Dendritic cell treated with granulocyte-macrophage colony-stimulating factor and Interleukin-4, amounts not matched to agents 40 ng/mL and 50 ng/mL, for 4 days (primary cell): ENCODE measurements at regions of chr2 and their contacts with region 1.

Region 1: DNA sequence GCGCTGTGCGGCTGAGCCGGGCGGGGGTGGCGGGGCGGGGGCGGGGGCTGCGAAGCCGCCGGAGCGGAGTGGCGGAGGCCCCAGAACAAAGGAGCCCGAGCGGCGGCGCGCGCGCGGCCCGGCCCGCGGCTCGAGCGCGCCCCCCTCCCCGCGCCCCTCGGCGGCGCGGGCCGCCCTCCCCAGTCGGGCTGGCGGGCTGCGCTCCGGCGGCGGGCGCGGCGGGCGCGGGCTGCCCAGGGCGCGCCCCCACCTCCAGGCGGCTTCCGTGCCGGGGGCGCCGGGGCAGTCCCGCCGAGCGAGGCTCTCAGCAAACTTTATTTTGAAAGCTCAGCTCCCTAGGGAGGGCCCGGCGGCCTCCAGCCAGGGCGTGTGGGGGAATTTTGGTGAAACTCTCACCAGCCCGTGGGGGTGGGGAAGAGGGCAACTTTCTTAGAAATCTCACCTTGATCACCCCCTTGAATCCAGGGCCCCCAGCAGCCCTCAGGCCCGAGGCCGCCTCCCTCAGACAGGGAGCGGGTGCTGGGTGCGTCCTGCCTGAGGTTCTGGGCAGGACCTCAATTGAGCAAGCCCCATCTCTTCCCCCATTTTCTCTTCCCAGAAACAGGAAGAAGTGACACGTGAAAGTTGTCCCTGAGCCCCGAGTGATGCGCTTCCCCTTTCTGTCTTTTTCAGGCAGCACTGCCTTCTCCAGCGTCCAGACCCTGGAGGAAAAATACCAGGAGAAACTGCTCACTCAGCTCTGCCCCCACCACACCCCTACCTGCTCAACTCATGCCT is 786 bp downstream of the TET3 start:
- H3K4me3 Mint-ChIP-seq: peak overlapping the region; percentile 97
- H3K27ac Mint-ChIP-seq: peak overlapping the region; percentile 94
- H3K4me1 Mint-ChIP-seq: peaks cover 85% of the 10 kb centered on the region
- H3K27me3 Mint-ChIP-seq: no peaks in the 10 kb centered on the region

Region 2: DNA sequence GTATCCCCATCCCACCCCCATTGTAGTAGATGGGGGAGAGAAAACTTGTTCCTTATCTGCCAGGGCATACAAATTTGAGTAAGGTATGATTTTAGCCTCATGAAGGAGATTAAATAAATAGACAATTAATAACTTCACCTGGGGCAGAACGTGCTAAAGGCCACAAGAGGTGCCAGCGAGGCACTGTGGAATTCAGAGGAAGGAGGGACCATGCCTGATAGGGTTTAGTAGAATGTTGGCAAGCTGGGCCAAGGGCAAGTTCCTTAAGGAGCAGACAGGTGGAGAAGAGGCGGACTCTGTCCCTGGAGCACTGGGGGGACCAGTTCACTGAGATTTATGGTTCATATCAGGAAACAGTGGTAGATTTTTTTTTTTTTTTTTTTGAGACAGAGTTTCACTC is 134.2 kb before region 1 on chr2:
- intact Hi-C with region 1: loop called (anchors 10 kb)
- H3K4me3 Mint-ChIP-seq: no peak overlapping the region
- H3K27ac Mint-ChIP-seq: no peak overlapping the region
- H3K4me1 Mint-ChIP-seq: no peaks in the 10 kb centered on the region
- H3K27me3 Mint-ChIP-seq: no peaks in the 10 kb centered on the region

Region 3: GRCh38 chr2:73896362-73897239 is 88.9 kb before region 1 on chr2:
- intact Hi-C with region 1: no loop called
- H3K4me3 Mint-ChIP-seq: no peak overlapping the region
- H3K27ac Mint-ChIP-seq: no peak overlapping the region
- H3K4me1 Mint-ChIP-seq: peaks cover 27% of the 10 kb centered on the region
- H3K27me3 Mint-ChIP-seq: peaks cover 11% of the 10 kb centered on the region

Region 4: DNA sequence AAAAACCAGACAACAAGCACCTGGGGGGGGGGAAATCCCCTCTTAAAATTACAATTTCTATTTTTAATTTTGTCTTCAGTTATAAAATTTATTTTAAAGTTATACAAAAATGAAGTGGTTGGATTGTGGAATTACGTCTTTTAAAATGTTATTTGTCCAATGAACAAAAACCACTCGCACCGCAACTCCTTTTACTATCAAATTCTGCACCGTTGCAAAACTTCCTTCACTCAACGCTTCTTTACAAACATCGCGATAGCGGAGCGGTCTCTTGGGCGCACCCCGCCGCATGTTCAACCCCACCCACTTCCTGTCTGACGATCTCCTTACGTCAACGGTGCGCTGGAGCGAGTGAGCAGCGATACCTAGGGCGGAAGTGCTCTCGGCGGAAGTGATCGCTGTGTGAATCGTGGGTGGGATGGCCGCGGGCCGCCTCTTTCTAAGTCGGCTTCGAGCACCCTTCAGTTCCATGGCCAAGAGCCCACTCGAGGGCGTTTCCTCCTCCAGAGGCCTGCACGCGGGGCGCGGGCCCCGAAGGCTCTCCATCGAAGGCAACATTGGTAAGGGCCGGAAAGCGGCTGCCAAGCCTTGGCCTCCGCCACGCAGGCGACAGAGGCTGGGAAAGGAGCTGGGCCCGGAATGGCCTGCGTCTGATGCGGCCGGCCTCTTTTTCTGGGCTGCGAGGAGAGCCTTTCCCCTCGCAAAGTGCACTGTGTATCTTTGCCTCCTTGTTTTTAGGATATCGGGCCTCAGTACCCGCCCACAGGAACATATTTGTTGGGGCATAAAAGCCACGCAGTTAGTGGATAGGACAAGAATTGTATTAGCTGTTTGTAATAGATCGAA is 58.8 kb before region 1 on chr2 and contains the start of gene DGUOK:
- intact Hi-C with region 1: loop called (anchors 1 kb)
- H3K4me3 Mint-ChIP-seq: peak within 1 kb of the TSS; percentile 82
- H3K27ac Mint-ChIP-seq: peak within 1 kb of the TSS; percentile 95
- H3K4me1 Mint-ChIP-seq: peaks cover 54% of the 10 kb centered on the region
- H3K27me3 Mint-ChIP-seq: no peaks in the 10 kb centered on the region

Region 5: DNA sequence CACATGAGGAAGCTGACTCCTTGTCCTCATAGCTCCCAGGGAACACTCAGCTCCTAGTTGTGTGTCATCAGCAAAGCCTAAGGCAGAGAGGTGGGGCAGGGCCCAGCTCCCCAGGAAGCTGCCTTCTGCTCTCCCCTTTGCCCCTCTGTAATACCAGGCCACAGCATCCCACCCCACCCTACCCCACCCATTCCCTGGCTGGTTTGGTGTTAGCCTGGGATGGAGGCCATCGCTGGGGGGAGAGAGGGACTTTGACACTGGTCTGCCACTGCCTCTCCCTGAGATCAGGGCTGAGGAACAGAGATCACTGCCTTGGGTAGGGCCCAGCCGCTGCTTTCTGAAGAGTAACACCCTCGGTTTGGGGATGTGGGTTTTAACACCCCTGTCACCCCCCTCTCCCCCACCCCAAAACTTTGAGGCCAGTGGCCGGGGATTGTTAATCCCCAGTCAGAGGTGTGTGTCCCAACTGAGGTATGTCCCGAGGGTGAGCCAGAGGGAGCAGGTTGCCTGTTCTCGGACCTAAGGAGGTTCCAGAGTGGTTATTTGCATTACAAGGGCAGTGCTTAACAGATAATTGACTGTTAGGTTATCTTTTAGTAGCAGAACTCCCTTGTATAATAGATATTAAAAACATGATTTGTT is 40.6 kb after region 1 on chr2:
- intact Hi-C with region 1: loop called (anchors 2 kb)
- H3K4me3 Mint-ChIP-seq: peak overlapping the region; percentile 2
- H3K27ac Mint-ChIP-seq: peak overlapping the region; percentile 87
- H3K4me1 Mint-ChIP-seq: peaks cover 76% of the 10 kb centered on the region
- H3K27me3 Mint-ChIP-seq: no peaks in the 10 kb centered on the region